Adrenal gland (tissue), 19 donors: ENCODE measurements at regions of chr10 and their contacts with region 1.

Region 1: DNA sequence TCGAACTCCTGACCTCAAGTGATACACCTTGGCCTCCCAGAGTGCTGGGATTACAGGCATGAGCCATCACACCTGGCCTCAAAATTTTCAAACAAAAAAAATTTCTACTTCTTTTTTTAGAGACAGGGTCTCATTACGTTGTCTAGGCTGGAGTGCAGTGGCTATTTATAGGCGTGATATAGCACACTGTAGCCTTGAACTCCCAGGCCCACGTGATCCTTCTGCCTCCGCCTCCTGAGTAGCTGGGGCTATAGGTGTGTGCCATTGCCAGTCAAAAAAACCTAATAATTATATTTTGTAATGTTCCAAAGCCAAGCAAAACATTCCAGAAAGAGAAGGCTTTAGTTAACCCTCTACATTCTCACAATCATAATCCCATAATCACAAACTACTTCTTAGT is 13.8 kb downstream of the POLR3A start:
- DNase-seq: peak in 2 of 7 donors; percentile 33 to 47
- H3K4me3 ChIP-seq: no peak overlapping the region
- H3K27ac ChIP-seq: peak overlapping the region in 1 of 5 donors; percentile 13
- H3K4me1 ChIP-seq: peaks cover 0 to 6% of the 10 kb centered on the region in 2 donors
- H3K27me3 ChIP-seq: no peaks in the 10 kb centered on the region
- CTCF ChIP-seq: no peak
- POLR2A ChIP-seq: no peak

Region 2: DNA sequence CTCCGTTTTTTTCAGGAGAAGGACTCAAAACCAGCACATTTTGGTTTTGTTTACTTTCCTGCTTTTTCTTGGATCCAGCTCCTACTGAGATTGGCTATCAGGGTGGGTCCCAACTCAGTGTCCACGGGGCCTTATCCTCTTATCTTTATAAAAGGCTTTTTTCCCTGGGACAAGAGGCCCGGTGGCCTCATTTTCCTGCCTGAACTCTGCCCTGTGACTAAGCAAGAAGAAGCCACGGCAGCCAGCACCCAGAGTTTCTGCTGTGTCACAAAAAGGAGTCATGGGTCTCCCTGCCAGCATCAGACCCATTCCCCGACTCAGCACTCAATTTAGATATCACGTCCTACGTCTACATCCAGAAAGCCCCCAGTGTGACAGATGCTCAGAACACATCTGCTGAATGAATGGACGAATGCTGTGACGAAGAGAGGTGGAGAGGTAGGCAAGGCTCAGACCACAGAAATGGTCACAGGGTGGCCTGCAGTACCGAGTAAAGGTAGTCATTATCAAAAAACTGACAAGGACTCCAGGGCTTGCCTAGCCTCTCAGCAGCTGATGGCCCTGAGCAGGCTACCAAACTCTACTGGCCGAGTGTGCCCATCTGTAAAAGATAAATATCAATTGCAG is 105.7 kb before region 1 on chr10:
- intact Hi-C with region 1: loop called in 1 of 2 experiments (anchors 10 kb)
- DNase-seq: peak; percentile 59 to 90 (median 83)
- H3K4me3 ChIP-seq: no peak overlapping the region
- H3K27ac ChIP-seq: peak overlapping the region; percentile 74 to 92 (median 86)
- H3K4me1 ChIP-seq: peaks cover 51 to 86% of the 10 kb centered on the region in 2 donors
- H3K27me3 ChIP-seq: no peaks in the 10 kb centered on the region
- CTCF ChIP-seq: no peak
- POLR2A ChIP-seq: peak in 1 of 2 donors; percentile 38

Region 3: DNA sequence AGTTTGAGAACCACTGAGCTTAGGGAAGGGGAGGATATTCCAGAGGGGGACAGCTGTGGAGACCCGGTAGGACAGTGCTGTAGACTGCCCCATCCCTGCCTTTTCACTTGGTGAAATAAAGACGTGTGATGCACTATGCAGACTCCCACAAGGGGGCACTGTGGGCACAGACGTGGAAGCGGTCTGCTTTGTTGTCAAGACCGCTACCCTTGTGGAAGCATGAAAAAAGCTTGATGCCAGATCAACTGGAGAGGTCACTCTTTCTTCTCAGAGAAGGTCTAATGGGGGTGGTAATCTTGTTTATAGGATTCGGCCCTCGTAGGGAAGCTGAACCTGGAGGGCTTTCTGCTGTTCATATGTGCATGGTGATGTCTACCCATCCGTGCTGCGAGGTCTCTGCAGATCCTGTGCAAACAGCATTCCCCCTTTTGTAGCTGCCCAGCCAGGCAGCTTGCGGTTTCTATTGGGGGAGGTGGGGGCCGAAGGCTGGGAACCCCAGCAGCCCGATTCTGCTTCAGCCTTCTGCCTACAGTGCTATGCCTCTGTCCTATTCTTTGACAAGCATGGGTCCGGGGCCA is 31.9 kb after region 1 on chr10:
- intact Hi-C with region 1: no loop called
- DNase-seq: peak; percentile 82 to 97 (median 90)
- H3K4me3 ChIP-seq: no peak overlapping the region
- H3K27ac ChIP-seq: no peak overlapping the region
- H3K4me1 ChIP-seq: peaks cover 0 to 13% of the 10 kb centered on the region in 2 donors
- H3K27me3 ChIP-seq: no peaks in the 10 kb centered on the region
- CTCF ChIP-seq: peak; percentile 84 to 92 (median 90)
- POLR2A ChIP-seq: no peak